ENCODE measurements at regions of chr16 and their contacts with region 1.

Region 1: GRCh38 chr16:30615358-30616091 is 5.3 kb upstream of the ZNF689 start:
- DNase-seq: peak; percentile 25
- ATAC-seq: peak; percentile 57; the same call in 1 of the 2 replicates
- H3K4me3 ChIP-seq: no peak overlapping the region
- H3K27ac ChIP-seq: no peak overlapping the region
- H3K4me1 ChIP-seq: peaks cover 6% of the 10 kb centered on the region
- H3K27me3 ChIP-seq: no peaks in the 10 kb centered on the region
- CTCF ChIP-seq: peak; percentile 20

Region 2: GRCh38 chr16:29656688-29657523 is 958.6 kb before region 1 on chr16:
- CTCF ChIA-PET with region 1: interaction called, 14 read pairs
- POLR2A ChIA-PET with region 1: no interaction called
- in situ Hi-C with region 1: no loop called
- intact Hi-C with region 1: no loop called
- DNase-seq: no peak
- ATAC-seq: no peak
- H3K4me3 ChIP-seq: no peak overlapping the region
- H3K27ac ChIP-seq: no peak overlapping the region
- H3K4me1 ChIP-seq: no peaks in the 10 kb centered on the region
- H3K27me3 ChIP-seq: no peaks in the 10 kb centered on the region
- CTCF ChIP-seq: no peak

Measured in Panc1 (cell line).